Activated B cell treated with CpG ODN at 0.5 μM for 24 hours (primary cell): ENCODE measurements at regions of chr17 and their contacts with region 1.

Region 1: DNA sequence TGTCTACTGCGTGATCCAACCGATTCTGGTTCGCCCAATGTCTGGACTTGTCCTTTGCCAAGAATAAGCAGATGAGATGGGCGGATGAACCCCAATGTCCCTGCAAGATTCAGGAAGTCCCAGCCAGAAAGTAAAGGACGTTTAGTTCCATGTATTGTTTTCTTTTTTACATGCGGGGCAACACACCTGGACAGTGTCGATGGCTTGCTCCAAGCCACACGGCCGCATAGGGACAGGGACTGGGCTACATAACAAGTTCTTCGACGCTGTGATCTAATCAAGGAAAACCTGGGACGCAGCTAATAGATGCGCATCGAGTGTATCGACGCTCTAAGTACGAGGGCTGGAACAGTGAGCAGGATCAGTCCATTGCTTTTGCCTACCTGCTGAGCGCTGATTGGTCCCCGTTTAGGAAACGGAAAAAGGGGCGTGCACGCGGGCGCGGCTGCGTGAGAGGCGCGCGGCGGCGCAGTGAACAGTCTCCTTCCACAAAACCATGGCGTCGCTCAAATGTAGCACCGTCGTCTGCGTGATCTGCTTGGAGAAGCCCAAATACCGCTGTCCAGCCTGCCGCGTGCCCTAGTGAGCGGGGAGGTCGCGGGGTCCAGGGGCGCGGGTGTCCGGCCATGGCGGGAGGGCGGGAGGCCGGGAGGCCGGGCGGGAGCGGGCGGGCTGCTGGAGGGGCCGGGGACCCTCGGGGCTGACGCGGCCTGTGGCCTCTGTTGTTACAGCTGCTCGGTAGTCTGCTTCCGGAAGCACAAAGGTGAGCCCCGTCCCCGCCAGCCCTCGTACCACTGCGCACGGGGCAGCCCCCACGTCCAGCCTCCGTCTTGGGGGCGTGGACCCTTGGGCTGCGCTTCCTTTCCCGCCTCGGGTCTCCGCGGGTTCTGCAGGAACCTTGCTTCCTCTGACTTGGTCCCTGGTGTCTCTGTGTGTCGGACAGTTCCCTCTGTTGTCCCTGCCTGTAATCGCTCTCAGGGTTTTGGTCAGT is at the start of gene ZNHIT3:
- DNase-seq: peak; percentile 80
- ATAC-seq: peak; percentile 89
- H3K4me3 Mint-ChIP-seq: peak within 1 kb of the TSS; percentile 98
- H3K27ac Mint-ChIP-seq: peak within 1 kb of the TSS; percentile 96
- H3K4me1 Mint-ChIP-seq: peaks cover 60% of the 10 kb centered on the region
- H3K27me3 Mint-ChIP-seq: peaks cover 10% of the 10 kb centered on the region
- CTCF ChIP-seq: no peak
- total RNA-seq, gene ZNHIT3: 35.5 and 37.0 TPM in 2 replicates

Region 2: DNA sequence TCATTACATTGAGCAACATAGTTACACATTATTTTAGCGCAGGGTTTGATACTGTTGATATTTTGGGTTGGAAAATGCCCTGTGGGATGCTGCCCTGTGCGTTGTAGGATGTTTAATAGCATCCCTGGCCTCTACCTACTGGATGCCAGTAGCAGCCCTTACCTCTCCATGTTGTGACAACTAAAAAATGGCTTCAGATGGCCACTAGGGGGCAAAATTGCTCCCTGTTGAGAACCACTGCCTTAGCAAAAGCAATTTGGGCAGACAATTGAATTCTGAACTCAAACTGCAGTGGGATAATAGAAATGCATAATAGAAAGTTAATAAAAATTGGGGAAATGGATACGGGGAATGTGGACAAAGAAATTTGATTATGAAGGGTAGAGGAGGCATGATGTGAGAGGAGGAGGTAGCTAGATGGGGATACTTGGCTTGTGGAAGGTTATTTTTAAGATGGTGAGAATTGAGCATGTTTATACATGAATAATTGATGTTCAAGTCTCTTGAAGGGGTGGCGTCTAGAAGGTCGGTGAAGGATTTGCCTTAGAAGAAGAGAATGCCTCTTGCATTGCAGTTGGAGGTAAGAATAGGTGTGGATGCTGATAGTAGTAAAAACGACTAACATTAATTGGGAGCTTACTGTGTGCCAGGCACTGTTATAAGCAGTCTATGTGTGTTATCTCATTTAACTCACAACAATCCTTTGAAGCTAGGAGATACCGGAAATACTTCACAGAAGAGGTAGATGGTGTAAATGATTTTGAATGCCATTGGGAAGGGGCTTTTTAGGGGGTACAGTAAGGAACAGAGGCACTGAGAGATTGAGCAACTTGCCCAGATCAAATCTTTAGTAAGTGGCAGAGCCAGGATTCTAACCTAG is 636.8 kb before region 1 on chr17:
- CTCF ChIA-PET with region 1: interaction called, 4 read pairs
- POLR2A ChIA-PET with region 1: no interaction called
- intact Hi-C with region 1: loop called (anchors 1 kb)
- DNase-seq: no peak
- ATAC-seq: peak; percentile 57
- H3K4me3 Mint-ChIP-seq: no peak overlapping the region
- H3K27ac Mint-ChIP-seq: no peak overlapping the region
- H3K4me1 Mint-ChIP-seq: no peaks in the 10 kb centered on the region
- H3K27me3 Mint-ChIP-seq: no peaks in the 10 kb centered on the region
- CTCF ChIP-seq: peak; percentile 52

Region 3: GRCh38 chr17:35981908-35982330 is 504.6 kb before region 1 on chr17:
- CTCF ChIA-PET with region 1: interaction called, 20 read pairs
- POLR2A ChIA-PET with region 1: no interaction called
- intact Hi-C with region 1: no loop called
- DNase-seq: no peak
- ATAC-seq: peak; percentile 54
- H3K4me3 Mint-ChIP-seq: no peak overlapping the region
- H3K27ac Mint-ChIP-seq: no peak overlapping the region
- H3K4me1 Mint-ChIP-seq: peaks cover 12% of the 10 kb centered on the region
- H3K27me3 Mint-ChIP-seq: peaks cover 11% of the 10 kb centered on the region
- CTCF ChIP-seq: no peak

Region 4: DNA sequence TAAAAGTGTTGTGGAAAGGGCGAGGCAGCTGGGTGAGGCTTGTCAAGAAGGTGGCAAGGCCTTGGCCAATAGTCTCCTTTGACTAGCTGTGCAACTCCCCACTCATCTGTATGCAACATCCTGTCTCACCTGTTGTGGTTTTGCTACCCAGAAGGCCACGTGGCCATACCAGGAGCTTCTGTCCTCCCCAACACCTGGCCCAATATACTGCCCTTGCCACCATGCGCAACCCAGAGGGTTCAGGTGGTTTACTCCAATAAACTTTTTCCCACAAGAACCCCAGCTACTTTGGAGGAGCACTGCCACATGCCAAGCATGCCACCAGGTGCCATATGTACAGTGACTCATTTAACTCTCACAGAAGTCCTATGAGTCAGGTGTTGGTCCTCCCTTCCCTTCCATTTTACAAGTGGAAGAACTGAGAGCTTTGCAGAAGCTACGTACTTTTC is 38.0 kb after region 1 on chr17:
- CTCF ChIA-PET with region 1: no interaction called
- POLR2A ChIA-PET with region 1: interaction called, 10 read pairs
- intact Hi-C with region 1: no loop called
- DNase-seq: no peak
- ATAC-seq: no peak
- H3K4me3 Mint-ChIP-seq: no peak overlapping the region
- H3K27ac Mint-ChIP-seq: no peak overlapping the region
- H3K4me1 Mint-ChIP-seq: peaks cover 2% of the 10 kb centered on the region
- H3K27me3 Mint-ChIP-seq: no peaks in the 10 kb centered on the region
- CTCF ChIP-seq: no peak

Region 5: DNA sequence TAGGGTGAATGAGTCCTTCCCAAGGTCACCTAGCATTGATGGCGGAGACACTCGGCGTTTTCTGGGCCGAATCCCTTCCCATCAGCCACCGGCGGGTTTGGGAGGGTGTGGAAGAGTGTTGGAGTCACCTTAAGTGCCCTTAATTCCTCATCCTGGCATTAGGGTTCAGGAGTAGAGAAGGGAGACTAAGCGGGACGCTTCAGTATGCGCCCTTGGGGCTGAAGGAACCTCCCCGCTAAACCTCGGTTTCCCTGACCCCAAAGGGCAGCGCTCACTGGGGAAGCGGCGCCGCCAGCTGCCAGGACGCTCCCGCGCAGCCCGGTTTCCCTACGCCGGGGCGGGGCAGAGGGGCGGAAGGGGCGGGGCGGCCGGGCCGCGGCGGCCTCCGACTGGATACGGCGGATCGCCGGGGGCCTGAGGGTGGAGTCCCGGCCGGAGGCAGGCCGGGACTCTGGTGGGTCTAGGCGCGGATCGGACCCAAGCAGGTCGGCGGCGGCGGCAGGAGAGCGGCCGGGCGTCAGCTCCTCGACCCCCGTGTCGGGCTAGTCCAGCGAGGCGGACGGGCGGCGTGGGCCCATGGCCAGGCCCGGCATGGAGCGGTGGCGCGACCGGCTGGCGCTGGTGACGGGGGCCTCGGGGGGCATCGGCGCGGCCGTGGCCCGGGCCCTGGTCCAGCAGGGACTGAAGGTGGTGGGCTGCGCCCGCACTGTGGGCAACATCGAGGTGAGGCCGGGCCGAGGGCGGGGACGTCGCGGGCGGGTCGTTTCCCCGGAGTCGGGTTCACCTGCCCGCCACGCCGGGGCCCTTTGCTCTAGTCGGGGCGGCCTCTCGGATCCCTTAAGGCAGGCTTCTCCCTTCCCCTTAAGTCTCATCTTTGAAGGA is 105.2 kb after region 1 on chr17 and contains the start of gene DHRS11:
- CTCF ChIA-PET with region 1: no interaction called
- POLR2A ChIA-PET with region 1: no interaction called
- intact Hi-C with region 1: loop called (anchors 1 kb)
- DNase-seq: peak; percentile 76
- ATAC-seq: peak; percentile 96
- H3K4me3 Mint-ChIP-seq: peak within 1 kb of the TSS; percentile 78
- H3K27ac Mint-ChIP-seq: peak within 1 kb of the TSS; percentile 46
- H3K4me1 Mint-ChIP-seq: peaks cover 13% of the 10 kb centered on the region
- H3K27me3 Mint-ChIP-seq: no peaks in the 10 kb centered on the region
- CTCF ChIP-seq: no peak
- total RNA-seq, gene DHRS11: 5.7 and 7.7 TPM in 2 replicates